ENCODE measurements at regions of chr2 and their contacts with region 1.

Region 1: DNA sequence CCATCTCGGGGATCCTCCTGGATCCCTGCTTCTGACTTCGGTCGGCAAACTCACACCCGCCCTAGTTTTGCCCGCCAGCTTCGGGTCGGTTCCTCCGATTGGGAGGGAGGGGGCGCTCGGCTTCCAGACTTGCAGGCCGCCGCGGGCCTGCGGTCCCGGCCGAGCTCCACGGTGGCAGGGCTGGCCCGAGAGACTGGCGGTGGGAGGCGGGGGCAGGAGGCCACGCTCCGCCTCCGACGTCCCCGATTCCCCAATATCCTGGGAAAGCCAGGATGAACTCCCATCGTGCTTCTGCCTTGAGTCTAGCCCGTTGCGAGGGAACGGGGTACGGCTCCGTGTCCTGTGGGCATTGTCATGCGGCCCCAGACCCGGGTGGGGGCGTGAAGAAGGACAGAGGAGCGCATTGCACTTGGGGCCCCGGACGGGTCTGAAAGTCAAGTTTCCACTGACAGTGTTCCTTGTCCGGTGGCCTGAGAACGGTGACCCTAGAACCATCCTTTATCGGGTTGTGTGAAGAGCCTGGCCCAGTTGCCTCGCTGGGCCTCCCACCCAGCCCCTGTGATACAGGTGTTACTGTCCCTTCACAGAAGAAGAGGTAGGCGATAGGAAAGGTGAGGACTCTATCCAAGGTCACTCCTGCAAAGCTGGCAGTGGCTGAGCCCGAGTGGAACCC is 2.4 kb upstream of the INHBB start:
- DNase-seq: peak; percentile 91
- ATAC-seq: peak; percentile 90

Region 2: GRCh38 chr2:120503793-120504571 is 160.4 kb after region 1 on chr2:
- intact Hi-C with region 1: loop called (anchors 5 kb)
- DNase-seq: peak; percentile 84
- ATAC-seq: peak; percentile 90

Region 3: GRCh38 chr2:120552800-120553481 is 209.4 kb after region 1 on chr2:
- intact Hi-C with region 1: loop called (anchors 10 kb)
- DNase-seq: peak; percentile 92
- ATAC-seq: peak; percentile 88

Region 4: DNA sequence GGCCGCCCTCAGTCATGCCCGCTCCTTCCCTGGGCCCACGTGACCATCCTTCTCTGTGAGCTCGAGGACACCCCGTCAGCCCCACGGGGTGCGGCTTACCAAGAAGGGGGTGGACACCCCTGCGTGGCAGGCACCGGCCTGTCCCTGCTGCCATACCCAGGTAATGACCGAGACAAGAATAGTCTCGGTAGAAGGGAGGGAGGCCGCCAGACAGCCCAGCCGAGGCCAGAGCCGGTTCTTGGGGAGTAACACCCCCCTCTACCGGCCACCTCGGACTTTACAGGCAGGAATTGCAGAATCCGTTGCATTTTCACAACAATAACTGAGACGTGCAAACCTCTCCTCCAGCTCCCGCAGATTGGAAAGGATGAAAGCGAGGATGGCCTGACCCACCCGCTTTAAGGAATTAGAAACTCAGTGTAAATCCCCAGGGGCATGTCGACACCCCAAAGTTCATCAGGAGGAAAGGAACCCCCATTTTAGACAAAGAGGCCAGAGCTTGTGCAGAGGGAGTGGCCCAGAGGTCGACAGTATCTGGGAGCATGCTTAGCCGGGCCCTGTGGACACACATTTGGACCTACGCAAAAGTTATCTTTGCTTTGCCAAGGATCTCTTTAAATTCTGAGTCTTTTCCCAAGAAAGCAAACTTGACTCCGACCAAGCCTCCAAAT is 332.0 kb after region 1 on chr2:
- intact Hi-C with region 1: loop called (anchors 2 kb)
- DNase-seq: peak; percentile 70
- ATAC-seq: peak; percentile 62